ENCODE measurements at regions of chr7 and their contacts with region 1.

Region 1: GRCh38 chr7:43679210-43680068 is 49.9 kb downstream of the COA1 start:
- DNase-seq: no peak
- ATAC-seq: no peak
- H3K4me3 ChIP-seq: no peak overlapping the region
- H3K27ac ChIP-seq: no peak overlapping the region
- H3K4me1 ChIP-seq: no peaks in the 10 kb centered on the region
- H3K27me3 ChIP-seq: no peaks in the 10 kb centered on the region
- CTCF ChIP-seq: no peak

Region 2: GRCh38 chr7:43602271-43602670 is 77.2 kb before region 1 on chr7:
- CTCF ChIA-PET with region 1: no interaction called
- POLR2A ChIA-PET with region 1: interaction called, 14 read pairs
- in situ Hi-C with region 1: no loop called
- intact Hi-C with region 1: no loop called
- DNase-seq: no peak
- ATAC-seq: no peak
- H3K4me3 ChIP-seq: no peak overlapping the region
- H3K27ac ChIP-seq: no peak overlapping the region
- H3K4me1 ChIP-seq: no peaks in the 10 kb centered on the region
- H3K27me3 ChIP-seq: no peaks in the 10 kb centered on the region
- CTCF ChIP-seq: no peak